GM12878 (cell line): ENCODE measurements at regions of chr1 and their contacts with region 1.

Region 1: GRCh38 chr1:107750358-107750959 is 214.5 kb downstream of the VAV3 start:
- DNase-seq: peak; percentile 19
- ATAC-seq: peak; percentile 83
- H3K4me3 ChIP-seq: no peak overlapping the region
- H3K27ac ChIP-seq: no peak overlapping the region
- H3K4me1 ChIP-seq: no peaks in the 10 kb centered on the region
- H3K27me3 ChIP-seq: no peaks in the 10 kb centered on the region
- CTCF ChIP-seq: peak; percentile 53 to 68 (median 60)
- EP300 ChIP-seq: no peak
- POLR2A ChIP-seq: no peak
- RAD21 ChIP-seq: peak; percentile 71

Region 2: GRCh38 chr1:107196973-107197562 is 553.4 kb before region 1 on chr1:
- CTCF ChIA-PET with region 1: interaction called, 4 read pairs
- POLR2A ChIA-PET with region 1: no interaction called
- RAD21 ChIA-PET with region 1: no interaction called
- SMC1A ChIA-PET with region 1: interaction called, 8 read pairs
- in situ Hi-C with region 1: no loop called
- intact Hi-C with region 1: loop called (anchors 2 kb)
- DNase-seq: peak; percentile 26
- ATAC-seq: peak; percentile 97
- H3K4me3 ChIP-seq: no peak overlapping the region
- H3K27ac ChIP-seq: no peak overlapping the region
- H3K4me1 ChIP-seq: no peaks in the 10 kb centered on the region
- H3K27me3 ChIP-seq: no peaks in the 10 kb centered on the region
- CTCF ChIP-seq: peak; percentile 39 to 65 (median 50)
- EP300 ChIP-seq: no peak
- POLR2A ChIP-seq: no peak
- RAD21 ChIP-seq: peak; percentile 65

Region 3: GRCh38 chr1:107277022-107277421 is 473.4 kb before region 1 on chr1:
- CTCF ChIA-PET with region 1: interaction called, 6 read pairs
- POLR2A ChIA-PET with region 1: no interaction called
- RAD21 ChIA-PET with region 1: interaction called, 3 read pairs
- SMC1A ChIA-PET with region 1: interaction called, 10 read pairs
- in situ Hi-C with region 1: no loop called
- intact Hi-C with region 1: loop called (anchors 2 kb)
- DNase-seq: no peak
- ATAC-seq: peak; percentile 75
- H3K4me3 ChIP-seq: no peak overlapping the region
- H3K27ac ChIP-seq: no peak overlapping the region
- H3K4me1 ChIP-seq: no peaks in the 10 kb centered on the region
- H3K27me3 ChIP-seq: no peaks in the 10 kb centered on the region
- CTCF ChIP-seq: peak; percentile 44 to 51 (median 46); a peak in 5 of 6 replicates
- EP300 ChIP-seq: no peak
- POLR2A ChIP-seq: no peak
- RAD21 ChIP-seq: peak; percentile 53

Region 4: GRCh38 chr1:107762751-107763390 is 12.4 kb after region 1 on chr1:
- CTCF ChIA-PET with region 1: interaction called, 10 read pairs
- POLR2A ChIA-PET with region 1: no interaction called
- RAD21 ChIA-PET with region 1: interaction called, 3 read pairs
- SMC1A ChIA-PET with region 1: interaction called, 8 read pairs
- in situ Hi-C with region 1: no loop called
- intact Hi-C with region 1: no loop called
- DNase-seq: no peak
- ATAC-seq: no peak
- H3K4me3 ChIP-seq: no peak overlapping the region
- H3K27ac ChIP-seq: no peak overlapping the region
- H3K4me1 ChIP-seq: no peaks in the 10 kb centered on the region
- H3K27me3 ChIP-seq: no peaks in the 10 kb centered on the region
- CTCF ChIP-seq: no peak
- EP300 ChIP-seq: no peak
- POLR2A ChIP-seq: no peak
- RAD21 ChIP-seq: no peak

Region 5: DNA sequence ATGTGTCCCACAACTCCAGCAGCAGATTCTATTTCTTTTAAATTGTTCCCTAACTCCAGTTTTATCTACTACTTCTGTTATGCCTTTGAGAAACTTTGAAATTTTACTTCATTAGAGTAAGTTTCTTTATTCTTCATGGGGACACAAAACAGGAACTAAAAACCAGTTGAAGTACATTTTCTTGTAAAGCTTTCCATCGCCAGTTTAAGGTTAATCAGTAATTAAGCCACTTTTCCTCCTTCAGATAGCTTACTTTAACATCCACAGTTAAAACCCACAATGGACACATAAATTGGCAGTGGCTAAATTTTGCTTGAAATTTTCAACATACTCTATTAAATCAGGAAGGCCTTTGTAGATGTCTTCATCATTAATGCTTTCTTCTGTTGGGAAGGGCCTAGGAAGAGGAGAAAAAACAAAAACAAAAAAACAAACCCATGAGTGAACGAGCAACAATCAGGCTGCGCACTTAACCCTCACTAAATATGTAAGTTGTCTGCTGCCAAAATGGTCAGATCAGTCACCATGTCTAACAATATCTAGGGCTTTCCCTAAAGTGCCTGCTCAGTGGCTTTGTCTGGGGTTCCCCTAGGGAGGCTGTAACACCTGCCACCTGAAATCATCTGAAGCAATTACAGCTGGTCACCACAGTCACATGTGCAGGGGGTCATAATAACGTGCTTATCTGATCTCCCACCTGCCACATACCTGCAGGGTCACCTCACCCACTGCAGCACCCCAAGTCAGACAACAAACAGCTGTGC is 26.6 kb after region 1 on chr1:
- CTCF ChIA-PET with region 1: interaction called, 19 read pairs
- POLR2A ChIA-PET with region 1: no interaction called
- RAD21 ChIA-PET with region 1: interaction called, 32 read pairs
- SMC1A ChIA-PET with region 1: interaction called, 41 read pairs
- in situ Hi-C with region 1: no loop called
- intact Hi-C with region 1: no loop called
- DNase-seq: peak; percentile 64
- ATAC-seq: peak; percentile 95
- H3K4me3 ChIP-seq: peak overlapping the region; percentile 6; the same call in 1 of the 2 replicates
- H3K27ac ChIP-seq: peak overlapping the region; percentile 61
- H3K4me1 ChIP-seq: peaks cover 11% of the 10 kb centered on the region
- H3K27me3 ChIP-seq: no peaks in the 10 kb centered on the region
- CTCF ChIP-seq: no peak
- EP300 ChIP-seq: peak; percentile 79 to 83; a peak in 3 of 4 replicates
- POLR2A ChIP-seq: no peak
- RAD21 ChIP-seq: no peak

Region 6: DNA sequence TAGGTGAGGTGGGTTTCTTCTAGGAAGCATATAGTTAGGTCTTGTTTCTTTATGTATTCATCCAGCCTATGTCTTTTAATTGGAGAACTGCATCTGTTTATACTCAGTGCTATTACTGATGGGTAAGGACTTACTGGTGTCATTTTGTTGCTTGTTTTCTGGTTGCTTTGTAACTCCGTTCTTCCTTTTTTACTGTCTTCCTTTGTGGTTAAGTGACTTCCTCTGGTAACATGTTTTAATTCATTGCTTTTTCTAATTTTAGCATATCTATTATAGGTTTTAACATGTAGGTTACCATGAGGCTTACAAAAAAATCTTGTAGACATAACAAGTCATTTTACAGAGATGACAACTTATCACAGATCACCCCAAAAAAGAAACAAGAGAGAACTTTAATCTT is 53.7 kb after region 1 on chr1:
- CTCF ChIA-PET with region 1: no interaction called
- POLR2A ChIA-PET with region 1: no interaction called
- RAD21 ChIA-PET with region 1: no interaction called
- SMC1A ChIA-PET with region 1: no interaction called
- in situ Hi-C with region 1: no loop called
- intact Hi-C with region 1: no loop called
- DNase-seq: no peak
- ATAC-seq: peak; percentile 41
- H3K4me3 ChIP-seq: no peak overlapping the region
- H3K27ac ChIP-seq: no peak overlapping the region
- H3K4me1 ChIP-seq: no peaks in the 10 kb centered on the region
- H3K27me3 ChIP-seq: no peaks in the 10 kb centered on the region
- CTCF ChIP-seq: no peak
- EP300 ChIP-seq: no peak
- POLR2A ChIP-seq: no peak
- RAD21 ChIP-seq: no peak